PC-9 (cell line): ENCODE measurements at regions of chr5 and their contacts with region 1.

Region 1: DNA sequence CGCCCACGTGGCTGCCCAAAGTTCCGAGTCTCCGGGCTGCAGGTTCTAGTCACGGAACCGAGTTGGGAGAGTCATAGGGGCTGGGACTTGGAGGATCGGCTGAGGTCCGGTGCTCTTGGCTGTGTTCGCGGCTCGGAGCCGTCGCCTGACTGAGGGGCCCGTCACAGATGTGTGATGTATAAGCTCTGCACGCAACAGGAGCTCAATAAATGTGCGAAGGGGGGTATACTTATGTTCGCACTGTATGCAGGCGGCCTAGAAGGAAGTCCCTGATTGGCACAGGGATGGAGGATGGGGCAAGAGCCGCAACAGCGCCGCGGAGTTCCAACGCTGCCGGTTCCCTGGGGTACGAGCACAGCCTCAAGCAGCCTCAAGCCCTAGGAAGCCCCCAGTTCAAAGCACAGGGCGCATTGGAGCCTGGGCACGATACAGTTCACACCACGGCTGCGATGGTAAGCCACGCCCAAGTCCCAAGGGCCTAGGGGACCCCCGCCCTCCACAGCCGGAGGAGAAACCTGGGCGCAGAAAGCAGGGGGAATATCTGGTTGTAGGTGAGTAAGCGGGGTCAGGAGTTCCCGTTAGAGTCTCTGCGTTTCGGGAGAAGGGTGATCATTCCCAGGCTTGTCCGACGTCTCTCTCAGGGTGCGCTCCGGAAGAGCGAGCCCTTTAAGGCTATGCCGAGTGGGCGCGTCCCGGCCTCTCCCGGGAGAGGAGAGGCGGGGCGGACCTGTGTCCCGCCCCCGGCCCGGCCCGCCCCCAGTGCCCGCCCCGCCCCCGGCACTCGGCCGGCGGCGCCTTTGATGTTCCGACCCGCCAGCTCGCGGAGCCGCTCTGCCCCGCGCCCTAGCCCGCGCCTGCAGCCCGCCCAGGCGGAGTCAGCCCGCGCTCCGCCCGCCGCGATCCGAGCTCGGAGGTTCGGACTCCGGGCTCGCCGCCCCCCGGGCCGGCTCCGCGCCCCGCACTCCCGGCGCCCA is at the start of gene TCF7:
- DNase-seq: peak; percentile 50 to 73
- H3K4me3 ChIP-seq: peak within 1 kb of the TSS; percentile 90
- H3K27ac ChIP-seq: no peak within 1 kb of the TSS
- H3K4me1 ChIP-seq: 0 out of 2 replicates have a peak, but pooled peaks cover 6% of the 10 kb centered on the region
- H3K27me3 ChIP-seq: no peaks in the 10 kb centered on the region
- CTCF ChIP-seq: no peak
- total RNA-seq, gene TCF7: 8.9 and 13.0 TPM in 2 replicates

Region 2: GRCh38 chr5:133193794-133194193 is 920.4 kb before region 1 on chr5:
- CTCF ChIA-PET with region 1: no interaction called
- POLR2A ChIA-PET with region 1: no interaction called
- intact Hi-C with region 1: no loop called
- DNase-seq: no peak
- H3K4me3 ChIP-seq: no peak overlapping the region
- H3K27ac ChIP-seq: no peak overlapping the region
- H3K4me1 ChIP-seq: no peaks in the 10 kb centered on the region
- H3K27me3 ChIP-seq: no peaks in the 10 kb centered on the region; the same call in 1 of the 2 replicates
- CTCF ChIP-seq: no peak

Region 3: DNA sequence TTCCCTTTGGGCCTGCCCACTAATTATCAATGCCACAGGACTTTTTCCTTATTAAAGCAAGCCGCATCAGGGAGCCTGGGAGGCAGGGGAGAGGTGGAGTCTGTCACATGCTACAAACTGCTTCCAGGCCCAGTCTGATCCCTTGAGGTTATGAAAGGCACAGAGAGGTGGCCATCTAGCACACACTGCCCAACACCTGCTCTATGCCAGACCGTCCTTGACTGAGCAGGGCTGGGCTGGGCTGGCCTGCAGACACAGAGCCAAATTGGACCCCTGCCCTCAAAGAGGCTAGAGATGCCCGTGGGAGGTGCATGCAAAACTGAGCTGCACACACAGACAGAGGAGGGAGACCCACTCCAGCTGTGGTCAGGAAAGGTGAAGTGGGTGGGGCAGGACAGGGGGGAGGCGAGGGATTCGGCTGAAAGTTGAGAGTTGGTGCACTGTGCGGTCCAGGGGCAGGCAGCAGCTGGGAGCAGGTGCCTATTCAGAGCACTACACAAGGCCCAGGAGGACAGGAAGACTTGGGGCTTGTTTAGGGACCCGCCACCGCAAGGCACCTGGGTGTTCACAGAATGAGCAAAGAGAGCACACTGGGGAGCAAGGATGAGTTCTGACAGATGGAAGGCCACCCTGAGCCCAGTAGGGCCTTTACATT is 36.1 kb before region 1 on chr5:
- CTCF ChIA-PET with region 1: no interaction called
- POLR2A ChIA-PET with region 1: interaction called, 11 read pairs
- intact Hi-C with region 1: no loop called
- DNase-seq: no peak
- H3K4me3 ChIP-seq: no peak overlapping the region
- H3K27ac ChIP-seq: no peak overlapping the region
- H3K4me1 ChIP-seq: no peaks in the 10 kb centered on the region
- H3K27me3 ChIP-seq: no peaks in the 10 kb centered on the region
- CTCF ChIP-seq: no peak

Region 4: DNA sequence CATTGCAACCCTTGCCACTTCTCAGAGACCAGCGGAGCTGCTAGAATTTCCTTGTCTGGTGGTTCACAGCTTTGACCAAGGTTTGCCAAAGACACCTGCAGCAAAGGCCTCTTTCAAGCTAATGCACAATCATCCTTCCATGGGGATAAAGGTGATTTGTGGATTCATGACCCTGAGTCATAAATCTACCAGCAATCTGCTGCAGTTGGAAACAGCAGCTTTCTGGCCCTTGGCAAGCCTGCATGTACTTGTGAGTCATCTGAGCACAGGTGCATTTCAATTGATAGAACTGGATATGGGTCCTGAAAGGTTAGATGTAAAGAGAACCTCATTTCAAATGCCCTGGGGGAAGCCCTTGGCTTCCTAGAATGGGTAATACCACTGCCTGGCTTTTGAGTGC is 21.3 kb before region 1 on chr5:
- CTCF ChIA-PET with region 1: no interaction called
- POLR2A ChIA-PET with region 1: no interaction called
- intact Hi-C with region 1: no loop called
- DNase-seq: peak; percentile 70 to 99
- H3K4me3 ChIP-seq: peak overlapping the region; percentile 13; the same call in 1 of the 2 replicates
- H3K27ac ChIP-seq: peak overlapping the region; percentile 93
- H3K4me1 ChIP-seq: peaks cover 47% of the 10 kb centered on the region
- H3K27me3 ChIP-seq: no peaks in the 10 kb centered on the region
- CTCF ChIP-seq: no peak

Region 5: DNA sequence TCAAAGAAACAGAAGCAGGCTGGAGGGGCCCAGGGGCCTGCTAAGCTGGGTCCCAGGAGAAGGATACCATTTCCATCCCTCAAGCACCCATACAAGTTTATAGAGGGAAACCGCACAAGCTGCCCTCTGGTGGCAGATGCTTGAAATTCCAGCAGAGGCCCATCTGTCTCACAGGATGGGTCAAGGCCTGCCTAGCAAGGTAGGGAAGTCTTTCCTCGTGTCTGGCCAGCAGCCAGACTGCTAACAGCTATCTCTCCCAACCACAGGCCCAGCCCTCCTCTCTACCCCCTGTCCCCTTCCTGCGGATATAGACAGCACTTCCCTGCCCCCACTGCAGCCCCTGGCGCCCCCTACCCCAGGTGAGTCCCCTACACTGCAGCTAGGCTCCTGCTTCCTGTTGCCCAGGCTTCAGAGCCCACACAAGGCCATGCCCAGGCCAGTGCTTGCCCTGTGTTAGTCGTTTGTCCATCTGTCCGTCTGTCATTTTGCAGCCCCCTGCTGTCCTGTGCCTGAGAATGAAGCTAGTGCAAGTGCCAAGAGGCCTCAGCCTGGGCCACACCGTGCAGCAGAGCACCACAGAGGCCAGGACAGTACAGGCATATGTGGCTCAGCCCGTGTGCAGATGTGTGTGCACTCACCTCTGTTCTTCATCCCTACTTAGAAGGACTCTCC is 26.5 kb after region 1 on chr5:
- CTCF ChIA-PET with region 1: no interaction called
- POLR2A ChIA-PET with region 1: no interaction called
- intact Hi-C with region 1: no loop called
- DNase-seq: peak; percentile 72 to 73
- H3K4me3 ChIP-seq: no peak overlapping the region
- H3K27ac ChIP-seq: no peak overlapping the region
- H3K4me1 ChIP-seq: peaks cover 21% of the 10 kb centered on the region
- H3K27me3 ChIP-seq: no peaks in the 10 kb centered on the region
- CTCF ChIP-seq: peak; percentile 83